ENCODE measurements at regions of chr10 and their contacts with region 1.

Region 1: GRCh38 chr10:48266528-48266927 is 8.0 kb downstream of the FRMPD2 start:
- DNase-seq: no peak
- ATAC-seq: peak; percentile 91
- H3K4me3 ChIP-seq: no peak overlapping the region
- H3K27ac ChIP-seq: no peak overlapping the region
- H3K4me1 ChIP-seq: no peaks in the 10 kb centered on the region
- H3K27me3 ChIP-seq: no peaks in the 10 kb centered on the region
- CTCF ChIP-seq: 0 out of 6 replicates have a peak, but pooled peaks of 1 of the 3 experiments have one; percentile 7
- EP300 ChIP-seq: no peak
- POLR2A ChIP-seq: no peak
- RAD21 ChIP-seq: no peak

Region 2: GRCh38 chr10:48253970-48254657 is 12.4 kb before region 1 on chr10:
- CTCF ChIA-PET with region 1: interaction called, 5 read pairs
- POLR2A ChIA-PET with region 1: no interaction called
- RAD21 ChIA-PET with region 1: interaction called, 3 read pairs
- SMC1A ChIA-PET with region 1: interaction called, 12 read pairs
- in situ Hi-C with region 1: no loop called
- intact Hi-C with region 1: no loop called
- DNase-seq: no peak
- ATAC-seq: no peak
- H3K4me3 ChIP-seq: no peak overlapping the region
- H3K27ac ChIP-seq: no peak overlapping the region
- H3K4me1 ChIP-seq: peaks cover 4% of the 10 kb centered on the region; the same call in 1 of the 2 replicates
- H3K27me3 ChIP-seq: no peaks in the 10 kb centered on the region
- CTCF ChIP-seq: no peak
- EP300 ChIP-seq: no peak
- POLR2A ChIP-seq: no peak
- RAD21 ChIP-seq: no peak

Measured in GM12878 (cell line).